Activated CD4-positive, alpha-beta T cell treated with anti-CD3 and anti-CD28 coated beads, Interleukin-2, amount 10 ng/mL, durations not matched to agents 7 days and 5 days (primary cell): ENCODE measurements at regions of chr11 and their contacts with region 1.

Region 1: DNA sequence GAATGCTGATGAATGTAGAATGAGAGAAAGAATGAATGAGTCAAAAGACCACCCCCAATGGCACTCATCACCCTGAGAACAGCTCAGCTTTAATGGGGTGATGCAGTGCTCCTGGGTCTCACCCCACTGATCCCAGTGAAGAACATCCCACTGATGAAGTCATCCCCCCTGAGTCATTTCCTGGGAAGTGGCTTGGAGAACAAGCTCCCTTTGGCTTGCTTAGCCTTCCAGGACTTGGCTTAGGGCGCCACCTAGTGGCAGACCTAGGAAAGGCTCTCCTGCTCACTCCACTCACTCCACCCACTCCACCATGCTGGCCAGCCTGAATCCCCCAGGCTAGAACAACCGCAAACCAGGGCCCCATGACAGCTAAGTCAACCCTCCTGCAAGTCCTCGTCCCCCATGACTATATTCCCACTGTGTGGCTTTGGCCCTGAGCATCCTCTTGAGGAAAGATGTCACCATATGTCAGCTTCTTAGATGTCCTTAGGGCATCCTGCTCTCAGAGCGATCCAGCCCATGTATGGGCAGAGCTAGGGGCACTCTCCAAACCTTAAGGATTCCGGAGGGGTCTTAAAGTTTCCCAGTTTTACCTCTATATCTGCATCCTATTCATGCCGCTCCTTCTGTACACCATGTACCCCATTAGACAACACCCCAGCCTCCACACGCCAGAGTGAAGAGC is 17.8 kb upstream of the TMPRSS13 start:
- DNase-seq: peak; percentile 85
- H3K4me3 Mint-ChIP-seq: no peak overlapping the region
- H3K27ac Mint-ChIP-seq: peak overlapping the region; percentile 9
- H3K4me1 Mint-ChIP-seq: peaks cover 79% of the 10 kb centered on the region
- H3K27me3 Mint-ChIP-seq: no peaks in the 10 kb centered on the region

Region 2: GRCh38 chr11:117807482-117808327 is 139.3 kb before region 1 on chr11:
- CTCF ChIA-PET with region 1: interaction called, 20 read pairs
- POLR2A ChIA-PET with region 1: no interaction called
- DNase-seq: peak; percentile 80
- H3K4me3 Mint-ChIP-seq: no peak overlapping the region
- H3K27ac Mint-ChIP-seq: no peak overlapping the region
- H3K4me1 Mint-ChIP-seq: peaks cover 18% of the 10 kb centered on the region
- H3K27me3 Mint-ChIP-seq: peaks cover 10% of the 10 kb centered on the region

Region 3: DNA sequence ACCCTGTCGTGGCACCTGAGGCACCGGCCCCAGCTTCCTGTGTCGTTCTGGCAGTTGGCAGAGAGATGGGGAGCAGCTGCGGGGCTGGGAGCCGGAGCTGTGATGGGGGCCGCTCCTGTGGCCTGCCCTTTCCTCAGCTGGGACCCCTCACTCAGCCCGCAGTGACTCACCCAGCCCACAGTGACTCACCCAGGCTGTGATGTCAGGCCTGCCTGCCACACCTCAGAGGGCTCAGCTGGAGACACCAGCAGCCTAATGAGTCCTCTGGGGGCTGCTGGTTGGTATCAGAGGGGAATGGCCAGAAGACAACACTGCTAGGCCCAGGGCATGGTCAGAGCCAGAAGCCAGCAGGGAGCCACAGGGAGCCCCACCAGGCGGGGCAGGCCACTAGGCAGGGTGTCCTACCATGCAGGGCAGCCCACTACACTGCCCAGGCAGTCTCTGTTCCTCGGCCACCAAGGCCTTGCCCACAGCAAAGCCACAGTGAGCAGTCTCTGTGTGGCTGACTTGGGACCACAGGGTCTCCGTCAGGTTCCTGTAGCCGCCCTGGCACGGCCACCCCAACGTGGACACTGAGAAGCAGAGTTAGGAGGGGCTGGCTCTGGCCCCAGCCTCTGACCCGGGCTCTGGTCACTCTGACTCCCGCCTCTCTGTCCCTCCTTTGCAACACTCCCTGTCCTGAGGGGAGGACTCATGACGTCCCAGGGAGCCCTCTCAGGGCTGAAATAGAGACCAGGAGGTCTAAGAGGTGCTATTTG is 118.2 kb before region 1 on chr11:
- CTCF ChIA-PET with region 1: interaction called, 27 read pairs
- POLR2A ChIA-PET with region 1: no interaction called
- DNase-seq: peak; percentile 70
- H3K4me3 Mint-ChIP-seq: peak overlapping the region; percentile 13
- H3K27ac Mint-ChIP-seq: peak overlapping the region; percentile 82
- H3K4me1 Mint-ChIP-seq: peaks cover 58% of the 10 kb centered on the region
- H3K27me3 Mint-ChIP-seq: peaks cover 2% of the 10 kb centered on the region

Region 4: GRCh38 chr11:117921456-117921855 is 25.5 kb before region 1 on chr11:
- CTCF ChIA-PET with region 1: interaction called, 10 read pairs
- POLR2A ChIA-PET with region 1: no interaction called
- DNase-seq: no peak
- H3K4me3 Mint-ChIP-seq: no peak overlapping the region
- H3K27ac Mint-ChIP-seq: peak overlapping the region; percentile 57
- H3K4me1 Mint-ChIP-seq: peaks cover 11% of the 10 kb centered on the region
- H3K27me3 Mint-ChIP-seq: no peaks in the 10 kb centered on the region

Region 5: DNA sequence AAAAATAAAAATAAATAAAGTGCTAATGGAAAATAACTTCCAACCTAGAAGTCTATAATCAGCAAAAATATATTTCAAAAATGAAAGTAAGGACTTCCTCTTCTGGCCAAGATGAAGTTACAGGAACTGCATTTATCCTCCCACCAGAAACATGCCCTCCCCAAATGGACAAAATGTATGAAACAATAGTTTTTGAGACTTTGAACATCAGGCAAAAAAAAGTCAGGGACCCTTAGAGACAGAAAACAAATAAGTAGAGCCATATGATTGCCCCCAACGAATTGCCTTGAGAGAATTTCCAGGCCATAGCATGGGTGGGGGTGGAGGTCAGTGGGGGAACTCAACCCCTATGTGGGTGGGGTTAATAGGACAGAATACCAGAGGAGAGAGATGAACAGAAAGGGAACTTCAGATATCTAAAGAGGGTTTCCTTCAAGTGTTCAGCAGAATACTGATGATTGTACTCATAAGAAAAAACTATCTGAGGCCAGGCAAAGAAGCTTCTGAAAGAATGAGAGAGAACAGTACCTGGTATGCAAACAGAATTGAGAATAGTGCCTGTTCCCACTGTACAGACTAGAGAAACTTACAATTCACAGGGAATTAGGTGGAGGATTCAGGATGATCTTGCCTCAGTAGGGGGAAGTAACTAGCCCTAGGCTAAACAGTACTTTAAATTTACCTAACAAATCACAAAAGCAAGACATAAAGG is 12.6 kb after region 1 on chr11:
- CTCF ChIA-PET with region 1: interaction called, 14 read pairs
- POLR2A ChIA-PET with region 1: no interaction called
- DNase-seq: no peak
- H3K4me3 Mint-ChIP-seq: no peak overlapping the region
- H3K27ac Mint-ChIP-seq: peak overlapping the region; percentile 80
- H3K4me1 Mint-ChIP-seq: peaks cover 43% of the 10 kb centered on the region
- H3K27me3 Mint-ChIP-seq: no peaks in the 10 kb centered on the region

Region 6: GRCh38 chr11:117985953-117986887 is 39.2 kb after region 1 on chr11 and contains the start of gene IL10RA:
- CTCF ChIA-PET with region 1: interaction called, 17 read pairs
- POLR2A ChIA-PET with region 1: interaction called, 11 read pairs
- DNase-seq: peak; percentile 80
- H3K4me3 Mint-ChIP-seq: peak within 1 kb of the TSS; percentile 85
- H3K27ac Mint-ChIP-seq: peak within 1 kb of the TSS; percentile 97
- H3K4me1 Mint-ChIP-seq: peaks cover 74% of the 10 kb centered on the region
- H3K27me3 Mint-ChIP-seq: no peaks in the 10 kb centered on the region
- total RNA-seq, gene IL10RA: 161 to 187 TPM

Region 7: GRCh38 chr11:118051611-118052461 is 104.9 kb after region 1 on chr11:
- CTCF ChIA-PET with region 1: interaction called, 58 read pairs
- POLR2A ChIA-PET with region 1: interaction called, 3 read pairs
- DNase-seq: peak; percentile 86
- H3K4me3 Mint-ChIP-seq: peak overlapping the region; percentile 54
- H3K27ac Mint-ChIP-seq: peak overlapping the region; percentile 98
- H3K4me1 Mint-ChIP-seq: peaks cover 64% of the 10 kb centered on the region
- H3K27me3 Mint-ChIP-seq: no peaks in the 10 kb centered on the region

Region 8: GRCh38 chr11:118068945-118069612 is 122.1 kb after region 1 on chr11:
- CTCF ChIA-PET with region 1: no interaction called
- POLR2A ChIA-PET with region 1: no interaction called
- DNase-seq: no peak
- H3K4me3 Mint-ChIP-seq: no peak overlapping the region
- H3K27ac Mint-ChIP-seq: no peak overlapping the region
- H3K4me1 Mint-ChIP-seq: peaks cover 2% of the 10 kb centered on the region
- H3K27me3 Mint-ChIP-seq: peaks cover 5% of the 10 kb centered on the region